ENCODE measurements at regions of chr17 and their contacts with region 1.

Region 1: DNA sequence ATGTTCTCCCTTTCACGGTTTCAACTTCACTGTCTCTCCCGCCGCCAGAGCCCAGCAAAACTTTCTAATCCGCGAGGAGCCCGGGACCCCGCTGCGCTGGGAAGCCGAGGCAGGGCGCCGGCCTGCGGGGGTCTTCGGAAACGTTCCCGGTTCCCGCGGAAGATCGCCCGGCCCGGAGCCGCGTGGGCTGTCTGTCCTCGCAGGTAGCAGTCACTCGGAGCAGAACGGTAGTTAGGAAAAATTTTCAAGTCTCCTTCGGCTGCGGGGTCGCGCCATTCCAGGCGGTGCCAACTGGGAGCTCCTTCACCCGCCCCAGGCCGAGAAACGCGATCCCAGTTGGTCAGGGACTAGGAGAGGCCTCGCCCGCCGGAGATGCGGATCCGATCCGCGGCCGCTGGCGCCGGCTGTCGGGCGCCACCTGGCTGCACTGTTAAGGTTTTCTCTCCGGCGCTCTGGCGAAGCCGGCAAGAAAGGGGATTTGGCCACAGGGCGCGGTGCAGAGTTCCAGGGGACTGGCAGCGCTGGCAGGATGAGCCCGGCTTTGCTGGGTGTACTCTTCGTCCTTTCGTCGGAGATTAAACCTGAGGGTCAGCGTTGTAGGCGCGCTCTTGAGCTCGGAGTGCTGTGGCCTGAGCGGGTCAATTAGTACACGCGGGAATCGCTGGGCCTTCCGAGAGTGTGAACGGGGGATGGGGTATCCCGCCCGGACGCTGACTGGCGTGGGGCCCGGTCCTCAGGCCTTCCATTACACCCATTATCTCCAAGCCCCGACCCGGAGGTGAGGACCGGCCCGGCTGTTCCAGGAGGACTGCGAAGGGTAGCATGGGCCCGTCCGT is 135.4 kb downstream of the KCNJ12 start:
- DNase-seq: peak; percentile 77

Region 2: DNA sequence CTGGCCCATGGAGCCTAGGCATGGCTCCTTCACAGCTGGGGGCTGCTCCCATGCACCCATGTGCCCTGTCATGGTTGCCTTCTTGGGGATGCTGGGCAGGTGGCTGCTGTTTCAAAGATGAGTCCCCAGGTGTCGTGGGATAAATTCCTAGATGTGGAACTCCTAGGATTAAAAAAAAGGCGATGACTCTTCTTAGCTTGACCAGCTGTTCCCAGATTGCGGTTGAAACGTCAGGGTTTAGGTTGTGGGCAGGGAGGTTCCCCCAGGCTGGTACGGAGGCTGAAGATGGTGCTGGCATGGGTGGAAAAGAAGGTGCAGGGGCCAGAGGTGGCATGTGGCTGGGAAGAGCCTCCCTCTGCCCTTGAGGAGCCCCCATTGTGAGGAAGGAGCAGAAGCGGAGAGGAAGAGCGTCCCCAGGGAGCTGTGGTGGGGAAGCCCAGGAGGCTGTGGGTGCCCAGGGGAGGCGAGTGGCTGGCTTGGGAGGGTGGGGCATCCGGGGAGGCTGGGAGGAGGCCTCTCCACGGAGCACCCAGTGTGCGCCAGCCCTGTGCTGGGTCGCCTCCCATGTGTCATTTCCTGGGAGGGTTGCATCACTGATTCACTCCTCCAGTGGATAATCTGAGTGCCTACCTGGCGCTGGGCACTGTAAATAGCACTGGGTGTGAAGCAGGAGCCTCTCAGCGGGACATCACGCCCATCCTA is 142.9 kb before region 1 on chr17:
- CTCF ChIA-PET with region 1: no interaction called
- POLR2A ChIA-PET with region 1: no interaction called
- DNase-seq: no peak

Region 3: DNA sequence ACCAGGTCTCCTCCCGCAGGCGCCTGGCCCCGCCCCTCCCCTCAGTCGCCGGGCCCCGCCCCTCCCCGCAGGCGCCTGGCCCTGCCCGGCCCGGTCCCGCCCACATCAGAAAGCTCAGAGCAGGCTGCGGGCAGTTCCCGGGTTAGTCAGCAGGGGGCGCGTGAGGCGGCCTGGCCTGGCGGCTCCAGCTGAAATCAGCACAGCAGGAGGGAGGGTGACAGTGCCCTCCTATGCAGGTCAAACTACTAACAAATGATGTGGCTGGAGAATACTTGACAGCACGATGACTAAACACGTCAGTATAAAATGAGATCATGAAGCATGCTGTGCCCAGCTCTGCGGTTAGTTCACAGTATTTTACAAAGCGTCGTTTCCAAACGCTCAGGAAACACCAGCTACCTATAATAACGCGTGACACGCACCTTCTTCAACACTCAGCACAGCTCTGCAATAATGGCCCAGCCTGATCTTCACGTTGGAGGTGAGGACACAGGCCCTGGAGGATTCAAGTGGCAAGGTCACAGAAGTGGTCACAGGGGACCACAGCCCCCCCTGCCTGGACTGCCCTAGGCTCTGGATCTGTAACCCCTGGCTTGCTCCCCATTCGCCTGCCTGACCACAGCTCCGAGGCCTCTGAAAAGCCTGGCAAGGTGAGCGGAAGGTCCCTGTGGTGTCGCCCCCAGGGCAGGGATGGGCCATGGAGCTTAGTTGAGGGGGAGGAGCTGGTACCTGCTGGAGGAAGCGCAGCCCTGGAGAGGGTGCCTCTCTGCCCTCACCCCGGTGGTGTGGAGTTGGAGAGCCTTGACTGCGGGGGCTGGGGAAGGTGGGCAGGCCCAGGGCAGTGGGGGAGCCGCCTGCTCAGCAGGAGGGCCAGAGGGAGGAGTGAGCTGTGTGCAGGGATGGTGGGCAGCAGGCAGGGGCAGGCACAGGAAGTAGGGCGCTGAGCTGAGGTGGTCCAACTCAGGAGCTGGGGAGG is 54.2 kb before region 1 on chr17:
- CTCF ChIA-PET with region 1: interaction called, 27 read pairs
- POLR2A ChIA-PET with region 1: interaction called, 9 read pairs
- DNase-seq: peak; percentile 95